ENCODE measurements at regions of chr2 and their contacts with region 1.

Region 1: DNA sequence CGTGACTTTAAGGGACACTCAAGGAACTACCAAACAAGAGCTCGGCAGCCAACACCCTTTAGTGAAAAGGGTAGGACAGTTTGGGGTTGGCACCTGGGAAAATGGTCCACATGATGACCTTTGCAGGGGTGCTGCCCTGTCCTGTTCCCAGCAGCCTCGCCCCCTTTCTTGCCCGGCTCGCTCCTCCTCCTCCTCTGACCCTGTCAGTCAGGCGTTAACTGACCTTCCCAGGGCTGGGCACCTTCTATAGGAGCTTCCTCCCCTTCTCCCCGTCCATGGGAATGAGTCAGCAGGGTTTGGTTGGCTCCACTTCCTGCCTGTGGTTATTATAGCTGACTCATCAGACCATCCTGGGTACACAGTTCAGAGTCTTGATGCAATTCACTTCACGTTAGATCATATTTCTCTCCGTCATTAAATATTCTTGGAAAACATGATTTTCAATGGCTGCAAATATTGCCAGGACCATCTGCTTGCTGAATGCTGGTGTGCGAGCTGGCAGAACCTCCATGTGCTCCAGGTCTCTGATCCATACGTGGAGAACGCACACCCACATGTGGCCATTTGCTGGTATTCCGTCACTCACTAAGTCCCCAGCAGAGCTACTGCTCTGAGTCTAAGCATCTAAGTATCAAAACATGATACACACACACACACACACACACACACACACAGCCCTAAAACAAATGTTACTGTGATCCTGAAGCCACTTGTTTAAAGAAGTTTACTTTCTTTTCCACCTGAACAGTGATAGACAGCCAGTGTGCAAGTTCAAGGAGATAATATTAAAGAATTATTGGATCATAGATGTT is 185.0 kb downstream of the ANAPC1 start:
- DNase-seq: peak; percentile 99
- H3K4me3 ChIP-seq: peak overlapping the region in 1 of 3 experiments; percentile 6
- H3K27ac ChIP-seq: peak overlapping the region; percentile 73
- H3K4me1 ChIP-seq: peaks cover 50% of the 10 kb centered on the region
- H3K27me3 ChIP-seq: no peaks in the 10 kb centered on the region
- CTCF ChIP-seq: peak; percentile 45 to 54

Region 2: GRCh38 chr2:111250448-111251030 is 448.4 kb before region 1 on chr2:
- CTCF ChIA-PET with region 1: no interaction called
- dilution Hi-C with region 1: no loop called
- in situ Hi-C with region 1: no loop called
- intact Hi-C with region 1: no loop called
- DNase-seq: no peak
- H3K4me3 ChIP-seq: no peak overlapping the region
- H3K27ac ChIP-seq: no peak overlapping the region
- H3K4me1 ChIP-seq: no peaks in the 10 kb centered on the region
- H3K27me3 ChIP-seq: no peaks in the 10 kb centered on the region
- CTCF ChIP-seq: no peak

Region 3: GRCh38 chr2:111618978-111619905 is 79.7 kb before region 1 on chr2:
- CTCF ChIA-PET with region 1: no interaction called
- dilution Hi-C with region 1: no loop called
- in situ Hi-C with region 1: no loop called
- intact Hi-C with region 1: loop called (anchors 1 kb)
- DNase-seq: no peak
- H3K4me3 ChIP-seq: no peak overlapping the region
- H3K27ac ChIP-seq: no peak overlapping the region
- H3K4me1 ChIP-seq: peaks cover 27% of the 10 kb centered on the region
- H3K27me3 ChIP-seq: no peaks in the 10 kb centered on the region
- CTCF ChIP-seq: peak in 1 of 2 donors; percentile 38

Region 4: GRCh38 chr2:111972955-111973565 is 274.1 kb after region 1 on chr2:
- CTCF ChIA-PET with region 1: no interaction called
- dilution Hi-C with region 1: no loop called
- in situ Hi-C with region 1: no loop called
- intact Hi-C with region 1: no loop called
- DNase-seq: no peak
- H3K4me3 ChIP-seq: no peak overlapping the region
- H3K27ac ChIP-seq: no peak overlapping the region
- H3K4me1 ChIP-seq: peaks cover 15% of the 10 kb centered on the region
- H3K27me3 ChIP-seq: peaks cover 9% of the 10 kb centered on the region
- CTCF ChIP-seq: no peak